ENCODE measurements at regions of chr7 and their contacts with region 1.

Region 1: DNA sequence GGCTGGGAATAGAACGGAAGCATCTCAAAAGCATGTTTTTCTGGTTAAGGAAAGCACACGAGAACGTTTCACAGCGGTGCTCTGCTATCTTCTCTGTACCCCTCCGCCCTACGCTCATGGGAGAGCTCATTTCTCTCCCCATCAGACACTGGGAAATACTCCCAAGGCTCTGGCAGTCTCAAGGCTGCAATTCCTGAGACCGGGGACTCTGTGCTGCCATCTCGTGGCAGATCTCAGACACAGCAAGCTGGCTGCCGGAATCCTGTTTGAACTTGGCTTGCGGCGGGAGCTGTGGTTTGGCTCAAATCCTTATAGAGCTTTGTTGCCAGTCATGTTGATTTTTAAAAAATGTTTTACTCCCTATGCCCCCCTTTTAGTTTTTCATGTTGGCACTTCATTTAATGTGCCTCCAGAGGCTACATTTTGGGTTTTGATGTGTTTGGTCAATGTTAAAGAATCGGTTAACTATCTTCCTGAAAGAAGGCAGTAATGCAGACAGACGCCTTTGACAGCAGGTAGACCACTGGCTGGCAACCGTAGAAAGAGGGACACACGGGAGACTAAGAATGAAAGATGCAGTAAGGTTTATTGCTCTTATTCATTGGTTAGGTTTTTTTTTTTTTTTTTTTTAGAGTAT is 27.6 kb downstream of the BMPER start:
- DNase-seq: no peak
- H3K4me3 ChIP-seq: peak overlapping the region in 1 of 4 donors; percentile 36
- H3K27ac ChIP-seq: no peak overlapping the region
- H3K4me1 ChIP-seq: peaks cover 0 to 15% (median 4%) of the 10 kb centered on the region in 3 donors
- H3K27me3 ChIP-seq: no peaks in the 10 kb centered on the region
- CTCF ChIP-seq: peak; percentile 86 to 96 (median 90)
- POLR2A ChIP-seq: no peak

Region 2: GRCh38 chr7:33261585-33261984 is 671.4 kb before region 1 on chr7:
- intact Hi-C with region 1: no loop called
- DNase-seq: no peak
- H3K4me3 ChIP-seq: no peak overlapping the region
- H3K27ac ChIP-seq: no peak overlapping the region
- H3K4me1 ChIP-seq: no peaks in the 10 kb centered on the region
- H3K27me3 ChIP-seq: no peaks in the 10 kb centered on the region
- CTCF ChIP-seq: no peak
- POLR2A ChIP-seq: no peak

Region 3: GRCh38 chr7:33757562-33758165 is 175.3 kb before region 1 on chr7:
- intact Hi-C with region 1: loop called (anchors 5 kb)
- DNase-seq: no peak
- H3K4me3 ChIP-seq: no peak overlapping the region
- H3K27ac ChIP-seq: no peak overlapping the region
- H3K4me1 ChIP-seq: peaks cover 0 to 3% (median 0%) of the 10 kb centered on the region in 3 donors
- H3K27me3 ChIP-seq: no peaks in the 10 kb centered on the region
- CTCF ChIP-seq: peak; percentile 14 to 67 (median 53)
- POLR2A ChIP-seq: no peak

Region 4: GRCh38 chr7:33986941-33987588 is 54.1 kb after region 1 on chr7:
- intact Hi-C with region 1: no loop called
- DNase-seq: no peak
- H3K4me3 ChIP-seq: no peak overlapping the region
- H3K27ac ChIP-seq: peak overlapping the region in 2 of 4 donors; percentile 51 to 69
- H3K4me1 ChIP-seq: no peaks in the 10 kb centered on the region
- H3K27me3 ChIP-seq: no peaks in the 10 kb centered on the region
- CTCF ChIP-seq: no peak
- POLR2A ChIP-seq: no peak